ENCODE measurements at regions of chr17 and their contacts with region 1.

Region 1: DNA sequence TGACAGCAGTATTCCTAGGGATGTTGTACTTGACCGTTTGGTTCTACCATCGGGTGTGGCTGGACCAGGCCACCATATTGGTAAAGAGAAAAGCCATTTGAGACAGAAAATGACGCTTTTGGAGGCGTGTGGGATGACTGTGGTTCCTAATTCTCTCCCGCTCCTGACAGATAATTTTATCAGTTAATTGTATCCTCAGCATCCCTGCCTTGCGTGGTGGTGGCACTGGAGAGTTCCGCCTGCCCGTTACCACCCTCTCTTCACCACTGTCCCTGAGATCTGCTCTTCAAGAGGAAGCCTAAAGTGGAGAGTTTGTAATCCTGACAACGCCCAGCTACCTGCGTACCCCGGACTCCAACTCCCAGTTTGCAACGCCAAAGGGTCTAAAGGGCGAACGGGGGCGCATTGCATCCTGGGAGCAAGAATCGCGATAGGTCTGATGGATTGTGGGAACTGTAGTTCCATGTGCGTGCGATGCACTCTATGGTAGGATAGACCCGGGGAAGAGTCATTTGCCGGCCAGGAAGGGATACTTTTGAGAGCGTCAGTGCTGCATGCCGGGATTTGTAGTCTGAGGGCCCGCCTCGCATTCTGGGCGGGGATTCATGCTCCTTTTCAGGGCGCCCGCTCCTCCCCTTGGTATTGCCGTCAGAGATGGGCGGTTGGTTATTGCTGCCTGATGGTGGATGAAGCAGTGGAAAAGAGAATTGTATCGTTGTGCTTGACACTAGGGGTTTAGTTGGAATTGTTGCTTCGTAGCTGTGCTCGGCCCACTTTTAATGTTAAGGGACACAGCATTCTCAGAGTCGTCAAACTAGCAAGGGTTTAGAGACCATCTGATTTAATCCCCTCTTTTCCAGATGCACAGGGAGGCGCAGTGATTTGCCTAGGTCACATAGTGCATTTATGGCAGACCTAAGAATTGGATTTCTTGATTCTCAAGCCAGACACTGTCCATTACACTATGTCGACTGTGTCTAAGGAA is 965 bp upstream of the PHF12 start:
- DNase-seq: peak; percentile 97
- H3K27ac ChIP-seq: peak overlapping the region; percentile 96
- CTCF ChIP-seq: no peak

Region 2: DNA sequence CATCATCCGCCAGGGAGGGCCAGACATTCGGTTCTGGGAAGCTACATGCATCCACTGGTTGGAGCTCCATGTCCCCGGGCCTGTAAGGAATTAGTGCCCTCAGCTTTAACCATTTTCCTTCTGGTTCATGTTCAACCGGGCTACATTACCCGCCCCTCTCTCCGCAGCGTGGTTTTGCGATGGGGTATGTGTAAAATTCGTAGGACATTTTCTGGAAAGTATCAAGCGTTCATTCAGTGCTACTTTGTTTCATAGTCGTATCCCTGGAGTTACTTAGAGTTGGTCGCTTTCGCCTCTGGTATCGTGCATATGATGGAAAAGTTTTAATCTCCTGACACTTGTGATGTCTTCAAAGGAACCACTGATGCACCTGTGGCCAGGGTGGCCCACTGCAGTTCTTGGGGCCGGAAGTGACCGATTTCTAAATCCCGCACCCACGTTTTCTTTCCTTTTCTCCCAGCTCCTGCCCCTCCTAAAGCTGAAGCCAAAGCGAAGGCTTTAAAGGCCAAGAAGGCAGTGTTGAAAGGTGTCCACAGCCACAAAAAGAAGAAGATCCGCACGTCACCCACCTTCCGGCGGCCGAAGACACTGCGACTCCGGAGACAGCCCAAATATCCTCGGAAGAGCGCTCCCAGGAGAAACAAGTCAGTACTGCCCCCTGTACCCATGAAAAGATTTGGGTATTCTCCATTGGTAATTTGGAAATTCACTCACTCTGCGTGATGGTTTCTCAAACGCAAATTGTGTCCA is 231.9 kb before region 1 on chr17:
- CTCF ChIA-PET with region 1: no interaction called
- POLR2A ChIA-PET with region 1: interaction called, 10 read pairs
- DNase-seq: no peak
- H3K27ac ChIP-seq: peak overlapping the region; percentile 99
- CTCF ChIP-seq: peak; percentile 12; the same call in 1 of the 2 replicates

Region 3: DNA sequence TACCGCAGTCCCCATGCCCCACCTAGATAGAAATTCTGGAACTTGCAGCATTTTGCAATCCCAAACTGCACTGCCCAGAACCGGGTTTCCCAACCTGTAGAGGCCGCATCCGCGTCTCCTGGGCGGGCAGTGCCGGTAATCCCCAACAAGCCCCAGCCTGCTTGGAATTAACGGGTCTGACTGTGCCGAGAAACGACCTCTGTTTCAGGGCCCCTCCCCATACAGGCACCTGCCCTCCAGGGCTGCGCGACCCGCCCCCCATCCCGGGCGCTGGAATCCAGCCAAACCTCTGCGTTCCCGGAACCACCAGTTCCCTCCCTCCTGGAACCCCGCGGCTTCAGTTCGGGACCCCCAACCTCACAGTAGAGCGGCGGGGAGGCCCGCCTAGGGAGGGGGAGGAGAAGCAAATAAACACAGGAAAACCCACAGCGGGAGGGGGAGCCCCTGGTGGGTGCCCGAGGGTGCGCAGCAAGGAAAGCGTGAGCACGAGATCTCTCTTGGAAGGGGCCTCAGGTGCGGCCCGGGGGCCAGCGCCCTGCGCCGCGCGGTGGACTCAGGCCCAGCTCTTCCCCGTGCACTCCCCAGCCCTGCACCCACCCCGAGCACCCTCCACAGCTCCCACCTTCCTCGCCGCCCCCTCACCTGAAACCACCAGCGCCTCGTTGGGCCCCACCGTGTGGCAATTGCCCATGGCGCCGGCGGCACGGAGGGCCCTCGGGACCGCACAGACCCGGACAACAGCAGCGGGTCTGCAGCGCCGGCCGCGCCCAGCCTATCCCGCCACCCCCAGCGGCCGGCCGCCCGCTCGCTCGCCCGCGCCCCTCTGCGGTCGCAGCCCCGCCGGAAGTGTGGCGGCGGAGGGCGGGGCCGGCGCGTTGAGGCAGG is 55.2 kb before region 1 on chr17 and contains the start of gene FLOT2:
- CTCF ChIA-PET with region 1: no interaction called
- POLR2A ChIA-PET with region 1: no interaction called
- DNase-seq: peak; percentile 92
- H3K27ac ChIP-seq: peak within 1 kb of the TSS; percentile 99
- CTCF ChIP-seq: no peak; the same call in 1 of the 2 replicates

Region 4: DNA sequence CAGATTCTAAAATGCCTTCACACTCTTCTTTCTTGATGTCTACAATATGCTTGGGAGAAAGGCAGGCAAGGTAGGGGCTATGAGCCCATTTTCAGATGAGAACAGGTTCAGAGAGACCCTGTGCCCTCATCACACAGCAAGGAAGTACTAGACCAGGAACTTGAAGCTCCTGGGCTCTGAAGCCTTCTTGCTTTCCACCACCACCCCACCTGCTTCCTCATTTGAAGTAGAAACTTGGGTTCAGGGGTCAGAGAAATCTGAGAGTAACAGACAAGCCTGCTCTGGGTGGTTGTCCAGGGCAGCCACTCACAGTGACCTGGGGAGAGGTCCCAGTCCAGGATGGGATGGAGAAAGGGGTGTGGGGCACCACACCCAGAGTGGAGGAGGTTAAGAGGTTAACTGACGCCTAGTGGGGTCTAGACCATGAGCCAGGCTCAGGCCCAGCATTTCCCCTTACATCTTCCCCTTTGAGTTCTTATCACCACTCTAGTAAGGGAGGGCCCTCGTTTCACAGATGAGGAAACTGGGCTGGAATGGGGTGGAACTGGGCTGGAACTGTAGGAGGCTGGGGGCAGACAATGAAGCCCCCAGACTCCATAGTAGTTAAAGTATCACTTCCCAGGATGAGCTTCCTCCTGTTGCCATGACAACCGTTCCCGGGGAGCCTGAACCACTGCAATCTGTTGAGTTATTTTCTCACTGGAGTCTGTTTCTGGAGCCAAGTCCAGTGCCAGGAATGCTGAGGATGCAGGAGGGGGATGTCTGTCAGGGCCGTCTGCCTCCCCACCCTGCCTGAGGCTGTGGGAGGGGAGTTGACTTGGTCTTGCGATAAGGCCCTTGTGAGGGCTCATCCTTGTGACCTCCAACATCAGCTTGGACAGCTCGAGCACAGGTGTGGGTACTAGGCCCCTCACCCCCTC is 15.2 kb after region 1 on chr17:
- CTCF ChIA-PET with region 1: interaction called, 10 read pairs
- POLR2A ChIA-PET with region 1: no interaction called
- DNase-seq: no peak
- H3K27ac ChIP-seq: no peak overlapping the region
- CTCF ChIP-seq: no peak

Measured in RWPE1 (cell line).